CD8-positive, alpha-beta T cell (primary cell): ENCODE measurements at regions of chr11 and their contacts with region 1.

Region 1: GRCh38 chr11:111777094-111778046 is 11.2 kb upstream of the PPP2R1B start:
- DNase-seq: peak in 5 of 9 experiments; percentile 2 to 80 (median 21)
- ATAC-seq: peak; percentile 93
- H3K4me3 ChIP-seq: no peak overlapping the region
- H3K4me3 Mint-ChIP-seq: no peak overlapping the region
- H3K27ac ChIP-seq: no peak overlapping the region
- H3K27ac Mint-ChIP-seq: no peak overlapping the region
- H3K4me1 ChIP-seq: no peaks in the 10 kb centered on the region
- H3K4me1 Mint-ChIP-seq: no peaks in the 10 kb centered on the region
- H3K27me3 ChIP-seq: no peaks in the 10 kb centered on the region
- H3K27me3 Mint-ChIP-seq: no peaks in the 10 kb centered on the region
- CTCF ChIP-seq: peak; percentile 75

Region 2: DNA sequence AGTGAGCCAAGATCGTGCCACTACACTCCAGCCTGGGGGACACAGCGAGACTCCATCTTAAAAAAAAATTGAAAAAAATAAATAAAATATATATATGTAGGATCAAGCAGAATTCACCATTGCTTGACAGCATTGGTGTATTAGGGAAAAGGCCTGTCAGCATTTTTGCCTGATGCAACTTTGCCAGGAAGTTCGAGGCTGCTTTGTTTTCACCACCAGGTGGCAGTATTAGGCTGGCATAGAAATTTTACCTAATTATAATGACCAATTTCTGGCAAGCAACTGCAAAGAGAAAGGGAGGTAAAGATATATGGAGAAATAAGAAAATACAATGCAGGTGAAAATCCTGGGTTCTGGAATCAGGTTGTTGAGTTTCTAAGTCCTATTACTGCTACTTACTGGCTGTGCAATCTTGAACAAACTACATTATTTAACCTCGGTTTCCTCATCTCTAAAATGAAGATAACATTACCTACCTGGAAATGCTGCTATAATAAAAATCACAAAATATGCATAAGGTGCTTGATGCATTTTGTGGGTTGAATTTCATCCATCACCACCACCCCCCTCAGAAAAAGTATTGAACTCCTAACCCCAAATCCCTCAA is 212.2 kb before region 1 on chr11:
- CTCF ChIA-PET with region 1: interaction called, 33 read pairs
- POLR2A ChIA-PET with region 1: no interaction called
- intact Hi-C with region 1: loop called (anchors 1 kb)
- DNase-seq: peak; percentile 17 to 74 (median 63)
- ATAC-seq: no peak
- H3K4me3 ChIP-seq: no peak overlapping the region
- H3K4me3 Mint-ChIP-seq: no peak overlapping the region
- H3K27ac ChIP-seq: no peak overlapping the region
- H3K27ac Mint-ChIP-seq: no peak overlapping the region
- H3K4me1 ChIP-seq: no peaks in the 10 kb centered on the region
- H3K4me1 Mint-ChIP-seq: no peaks in the 10 kb centered on the region
- H3K27me3 ChIP-seq: no peaks in the 10 kb centered on the region
- H3K27me3 Mint-ChIP-seq: no peaks in the 10 kb centered on the region
- CTCF ChIP-seq: peak; percentile 98

Region 3: DNA sequence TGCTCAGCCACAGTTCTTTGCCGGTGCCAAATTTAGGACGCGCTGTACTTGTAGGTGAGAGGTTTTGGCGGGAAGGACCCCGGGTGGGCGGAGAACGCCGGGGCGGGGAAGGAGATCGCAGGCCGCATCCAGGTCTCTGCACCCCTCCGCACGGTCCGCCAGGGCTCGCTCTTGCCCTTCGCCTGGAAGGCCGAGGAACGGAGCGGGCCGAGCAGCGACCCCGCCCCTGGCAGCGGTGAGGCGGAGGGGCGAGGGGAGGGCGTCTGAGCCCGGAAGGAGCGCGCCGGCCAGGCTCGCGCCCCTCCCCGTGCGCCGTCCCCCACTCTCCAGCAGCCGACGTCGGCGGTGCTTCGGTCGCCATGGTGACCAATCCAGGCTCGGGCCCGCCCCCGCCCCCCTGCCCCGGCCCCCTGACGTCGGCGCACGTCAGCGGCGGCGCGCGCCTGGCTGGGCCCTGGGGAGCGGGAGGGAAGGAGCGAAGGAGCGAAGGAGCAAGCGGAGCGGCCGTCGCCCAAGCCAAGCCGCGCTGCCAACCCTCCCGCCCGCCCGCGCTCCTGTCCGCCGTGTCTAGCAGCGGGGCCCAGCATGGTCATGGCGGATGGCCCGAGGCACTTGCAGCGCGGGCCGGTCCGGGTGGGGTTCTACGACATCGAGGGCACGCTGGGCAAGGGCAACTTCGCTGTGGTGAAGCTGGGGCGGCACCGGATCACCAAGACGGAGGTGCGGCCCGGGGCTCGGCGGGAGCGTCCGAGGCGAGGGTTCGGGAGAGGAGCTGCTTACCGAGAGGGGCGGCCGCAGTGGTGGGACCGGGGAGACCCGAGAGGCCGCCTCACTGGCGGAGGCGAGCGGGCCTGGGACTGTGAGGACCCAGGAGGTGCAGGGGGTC is 175.1 kb before region 1 on chr11 and contains the start of gene SIK2:
- CTCF ChIA-PET with region 1: interaction called, 19 read pairs
- POLR2A ChIA-PET with region 1: no interaction called
- intact Hi-C with region 1: loop called (anchors 1 kb)
- DNase-seq: peak; percentile 78 to 96 (median 90)
- ATAC-seq: peak; percentile 83
- H3K4me3 ChIP-seq: peak within 1 kb of the TSS; percentile 70 to 95
- H3K4me3 Mint-ChIP-seq: peak within 1 kb of the TSS; percentile 94
- H3K27ac ChIP-seq: peak within 1 kb of the TSS; percentile 77 to 94
- H3K27ac Mint-ChIP-seq: peak within 1 kb of the TSS; percentile 94
- H3K4me1 ChIP-seq: peaks cover 24% of the 10 kb centered on the region
- H3K4me1 Mint-ChIP-seq: peaks cover 27% of the 10 kb centered on the region
- H3K27me3 ChIP-seq: no peaks in the 10 kb centered on the region
- H3K27me3 Mint-ChIP-seq: no peaks in the 10 kb centered on the region
- CTCF ChIP-seq: peak; percentile 57
- total RNA-seq, gene SIK2: 2.9 to 3.2 TPM

Region 4: GRCh38 chr11:111788051-111788450 is 10.7 kb after region 1 on chr11:
- CTCF ChIA-PET with region 1: interaction called, 16 read pairs
- POLR2A ChIA-PET with region 1: no interaction called
- intact Hi-C with region 1: no loop called
- DNase-seq: no peak
- ATAC-seq: no peak
- H3K4me3 ChIP-seq: no peak overlapping the region
- H3K4me3 Mint-ChIP-seq: no peak overlapping the region
- H3K27ac ChIP-seq: no peak overlapping the region
- H3K27ac Mint-ChIP-seq: no peak overlapping the region
- H3K4me1 ChIP-seq: no peaks in the 10 kb centered on the region
- H3K4me1 Mint-ChIP-seq: no peaks in the 10 kb centered on the region
- H3K27me3 ChIP-seq: no peaks in the 10 kb centered on the region
- H3K27me3 Mint-ChIP-seq: no peaks in the 10 kb centered on the region
- CTCF ChIP-seq: no peak

Region 5: DNA sequence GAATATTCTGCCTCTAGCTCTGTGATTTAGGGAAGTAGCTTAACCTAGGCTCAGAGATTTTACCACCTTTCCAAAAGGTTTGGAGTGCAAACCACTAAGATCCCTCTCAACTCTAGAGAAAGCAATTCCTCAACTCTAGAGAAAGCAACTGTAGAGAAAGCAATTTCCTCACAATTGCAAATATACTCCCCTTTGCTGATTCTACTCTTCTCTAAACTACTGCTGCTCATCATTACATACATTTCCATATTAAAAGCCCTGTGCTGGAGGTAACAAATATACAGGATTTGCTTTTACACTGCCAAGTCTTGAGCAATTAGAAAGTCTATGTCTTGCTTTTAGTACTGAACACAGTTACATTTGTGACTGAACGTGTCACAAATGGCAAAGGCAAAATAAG is 45.8 kb after region 1 on chr11:
- CTCF ChIA-PET with region 1: no interaction called
- POLR2A ChIA-PET with region 1: no interaction called
- intact Hi-C with region 1: no loop called
- DNase-seq: no peak
- ATAC-seq: no peak
- H3K4me3 ChIP-seq: no peak overlapping the region
- H3K4me3 Mint-ChIP-seq: no peak overlapping the region
- H3K27ac ChIP-seq: no peak overlapping the region
- H3K27ac Mint-ChIP-seq: no peak overlapping the region
- H3K4me1 ChIP-seq: no peaks in the 10 kb centered on the region
- H3K4me1 Mint-ChIP-seq: no peaks in the 10 kb centered on the region
- H3K27me3 ChIP-seq: no peaks in the 10 kb centered on the region
- H3K27me3 Mint-ChIP-seq: no peaks in the 10 kb centered on the region
- CTCF ChIP-seq: no peak

Region 6: GRCh38 chr11:111841370-111842053 is 64.1 kb after region 1 on chr11:
- CTCF ChIA-PET with region 1: interaction called, 5 read pairs
- POLR2A ChIA-PET with region 1: no interaction called
- intact Hi-C with region 1: loop called (anchors 1 to 5 kb)
- DNase-seq: peak; percentile 66 to 92 (median 85)
- ATAC-seq: peak; percentile 95
- H3K4me3 ChIP-seq: no peak overlapping the region
- H3K4me3 Mint-ChIP-seq: no peak overlapping the region
- H3K27ac ChIP-seq: no peak overlapping the region
- H3K27ac Mint-ChIP-seq: no peak overlapping the region
- H3K4me1 ChIP-seq: no peaks in the 10 kb centered on the region
- H3K4me1 Mint-ChIP-seq: peaks cover 6% of the 10 kb centered on the region
- H3K27me3 ChIP-seq: no peaks in the 10 kb centered on the region
- H3K27me3 Mint-ChIP-seq: no peaks in the 10 kb centered on the region
- CTCF ChIP-seq: peak; percentile 87

Region 7: DNA sequence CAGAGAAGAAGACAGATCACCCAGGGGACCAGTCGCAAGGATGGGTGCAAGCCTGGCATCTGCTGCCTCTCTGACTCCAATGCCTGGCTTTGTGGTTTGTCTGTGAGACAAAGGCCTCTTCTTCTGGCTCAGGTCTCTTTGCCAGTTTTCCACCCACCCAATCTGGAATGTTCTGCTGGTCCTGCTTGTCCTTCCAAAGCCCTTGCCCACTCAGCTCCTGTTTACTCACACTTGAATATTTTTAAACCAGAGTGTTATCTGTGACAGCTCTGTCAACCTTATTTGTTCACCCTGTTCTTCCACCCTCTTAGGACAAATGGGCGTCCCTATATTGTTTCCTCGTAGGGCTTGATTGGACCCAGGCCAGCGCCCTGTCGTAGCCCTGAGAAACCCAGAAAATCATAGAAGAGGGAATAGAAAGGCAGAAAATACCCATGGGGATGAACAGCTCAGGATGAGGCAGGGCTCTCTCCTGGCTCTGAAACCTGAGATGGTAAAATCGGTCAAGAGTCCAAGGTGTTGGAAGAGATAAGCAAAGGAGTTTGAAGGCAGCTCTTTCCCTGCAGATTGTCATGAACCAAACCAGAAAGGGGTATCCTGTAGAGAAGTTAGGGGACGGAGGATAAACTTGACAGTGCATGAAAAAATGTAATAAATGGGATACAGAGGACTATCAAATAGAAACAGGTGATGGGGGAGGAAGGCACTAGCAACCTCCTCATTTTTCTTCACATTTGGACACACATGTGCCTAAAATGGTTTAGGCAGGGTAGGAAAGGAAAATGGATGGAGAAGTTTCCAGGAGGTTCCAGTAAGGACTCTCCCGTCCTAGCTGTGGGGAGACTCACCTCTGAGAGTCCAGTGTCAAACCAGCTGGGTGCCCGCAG is 133.5 kb after region 1 on chr11:
- CTCF ChIA-PET with region 1: no interaction called
- POLR2A ChIA-PET with region 1: no interaction called
- intact Hi-C with region 1: no loop called
- DNase-seq: no peak
- ATAC-seq: no peak
- H3K4me3 ChIP-seq: no peak overlapping the region
- H3K4me3 Mint-ChIP-seq: no peak overlapping the region
- H3K27ac ChIP-seq: no peak overlapping the region
- H3K27ac Mint-ChIP-seq: no peak overlapping the region
- H3K4me1 ChIP-seq: no peaks in the 10 kb centered on the region
- H3K4me1 Mint-ChIP-seq: no peaks in the 10 kb centered on the region
- H3K27me3 ChIP-seq: peaks cover 5 to 8% of the 10 kb centered on the region in 2 experiments
- H3K27me3 Mint-ChIP-seq: peaks cover 53% of the 10 kb centered on the region
- CTCF ChIP-seq: no peak